A673 (cell line): ENCODE measurements at regions of chr12 and their contacts with region 1.

Region 1: GRCh38 chr12:110038741-110039084 is 9.6 kb downstream of the C12orf76 start:
- DNase-seq: no peak
- H3K4me3 ChIP-seq: no peak overlapping the region
- H3K27ac ChIP-seq: no peak overlapping the region
- H3K4me1 ChIP-seq: peaks cover 7% of the 10 kb centered on the region
- H3K27me3 ChIP-seq: no peaks in the 10 kb centered on the region
- CTCF ChIP-seq: no peak

Region 2: GRCh38 chr12:109709401-109709991 is 329.2 kb before region 1 on chr12:
- CTCF ChIA-PET with region 1: no interaction called
- POLR2A ChIA-PET with region 1: interaction called, 18 read pairs
- intact Hi-C with region 1: no loop called
- DNase-seq: no peak
- H3K4me3 ChIP-seq: no peak overlapping the region
- H3K27ac ChIP-seq: no peak overlapping the region
- H3K4me1 ChIP-seq: peaks cover under 1% of the 10 kb centered on the region
- H3K27me3 ChIP-seq: peaks cover 4% of the 10 kb centered on the region
- CTCF ChIP-seq: no peak